ENCODE measurements at regions of chr16 and their contacts with region 1.

Region 1: DNA sequence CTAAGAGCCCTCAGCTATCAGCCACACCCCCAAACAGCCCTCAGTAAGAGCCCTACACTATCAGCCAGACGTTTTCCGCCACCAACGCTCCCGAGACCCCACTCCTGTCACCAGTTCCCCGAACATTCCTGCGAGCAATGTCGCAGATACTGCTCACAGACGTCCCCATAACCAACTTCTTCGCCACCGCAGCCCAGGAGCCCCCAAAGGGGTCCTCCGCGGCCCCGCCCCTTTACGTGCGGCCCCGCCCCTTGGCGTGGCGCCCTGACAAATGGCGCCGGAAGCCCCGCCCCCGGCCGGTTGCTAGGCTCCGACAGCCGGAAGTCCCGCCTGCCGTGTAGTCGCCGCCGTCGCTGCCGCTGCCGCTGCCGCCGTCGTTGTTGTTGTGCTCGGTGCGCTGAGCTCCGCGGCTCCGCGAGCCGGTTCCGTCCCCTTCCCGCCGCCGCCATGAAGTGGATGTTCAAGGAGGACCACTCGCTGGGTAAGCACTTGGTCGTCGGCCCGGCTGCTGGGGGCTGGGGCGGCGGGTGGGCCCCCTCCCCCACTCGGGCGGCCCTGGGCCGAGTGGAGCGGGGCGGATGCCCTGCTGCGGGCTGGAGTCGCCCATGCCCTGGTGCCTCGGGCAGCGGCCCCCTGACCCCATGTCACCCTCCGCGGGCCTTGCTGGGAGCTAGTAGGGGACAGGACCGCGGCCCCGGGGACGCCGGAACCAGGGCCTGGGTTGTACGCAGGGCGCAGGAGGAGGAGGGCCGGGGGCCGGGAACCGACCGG is at the start of gene GABARAPL2:
- DNase-seq: no peak
- H3K4me3 ChIP-seq: peak within 1 kb of the TSS; percentile 83
- H3K27me3 ChIP-seq: peaks cover 2% of the 10 kb centered on the region; the same call in 1 of the 2 replicates
- CTCF ChIP-seq: no peak
- polyA plus RNA-seq, gene GABARAPL2: 32.3 and 61.9 TPM in 2 replicates

Region 2: DNA sequence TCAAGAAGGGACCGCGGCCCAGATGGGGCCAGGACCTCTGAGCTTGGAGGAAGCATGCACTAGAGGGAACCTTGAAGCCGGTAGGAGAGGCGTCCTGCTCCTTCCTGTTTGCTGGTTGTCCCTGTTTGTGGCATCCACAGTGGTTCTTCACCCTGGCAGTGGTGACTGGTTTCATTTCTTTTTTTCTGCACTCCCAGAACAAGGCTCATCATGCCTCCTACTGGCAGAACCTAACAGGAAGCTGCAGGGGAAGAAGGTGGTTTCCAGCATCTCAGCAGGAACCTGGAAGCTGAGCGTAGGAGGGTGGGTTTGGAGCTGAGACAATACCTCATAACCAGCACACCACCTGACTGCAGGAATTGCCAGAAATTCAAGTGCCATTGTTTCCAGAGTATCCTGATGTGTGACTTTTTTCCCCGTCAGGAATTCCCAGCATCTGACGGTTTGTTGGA is 16.0 kb before region 1 on chr16:
- CTCF ChIA-PET with region 1: interaction called, 12 read pairs
- POLR2A ChIA-PET with region 1: no interaction called
- DNase-seq: no peak
- H3K4me3 ChIP-seq: no peak overlapping the region
- H3K27me3 ChIP-seq: no peaks in the 10 kb centered on the region
- CTCF ChIP-seq: peak; percentile 27